ENCODE measurements at regions of chrX and their contacts with region 1.

Region 1: GRCh38 chrX:154490414-154491083 is at the start of gene SLC10A3:
- DNase-seq: peak; percentile 92
- ATAC-seq: peak; percentile 86
- H3K4me3 ChIP-seq: peak within 1 kb of the TSS; percentile 84
- H3K27ac ChIP-seq: peak within 1 kb of the TSS; percentile 93
- H3K4me1 ChIP-seq: peaks cover 2% of the 10 kb centered on the region; the same call in 1 of the 2 replicates
- H3K27me3 ChIP-seq: no peaks in the 10 kb centered on the region
- CTCF ChIP-seq: 0 out of 2 replicates have a peak, but pooled peaks have one; percentile 10
- POLR2A ChIP-seq: peak; percentile 95
- RAD21 ChIP-seq: 0 out of 2 replicates have a peak, but pooled peaks have one; percentile 13
- total RNA-seq, gene SLC10A3: 15.2 and 16.1 TPM in 2 replicates

Region 2: DNA sequence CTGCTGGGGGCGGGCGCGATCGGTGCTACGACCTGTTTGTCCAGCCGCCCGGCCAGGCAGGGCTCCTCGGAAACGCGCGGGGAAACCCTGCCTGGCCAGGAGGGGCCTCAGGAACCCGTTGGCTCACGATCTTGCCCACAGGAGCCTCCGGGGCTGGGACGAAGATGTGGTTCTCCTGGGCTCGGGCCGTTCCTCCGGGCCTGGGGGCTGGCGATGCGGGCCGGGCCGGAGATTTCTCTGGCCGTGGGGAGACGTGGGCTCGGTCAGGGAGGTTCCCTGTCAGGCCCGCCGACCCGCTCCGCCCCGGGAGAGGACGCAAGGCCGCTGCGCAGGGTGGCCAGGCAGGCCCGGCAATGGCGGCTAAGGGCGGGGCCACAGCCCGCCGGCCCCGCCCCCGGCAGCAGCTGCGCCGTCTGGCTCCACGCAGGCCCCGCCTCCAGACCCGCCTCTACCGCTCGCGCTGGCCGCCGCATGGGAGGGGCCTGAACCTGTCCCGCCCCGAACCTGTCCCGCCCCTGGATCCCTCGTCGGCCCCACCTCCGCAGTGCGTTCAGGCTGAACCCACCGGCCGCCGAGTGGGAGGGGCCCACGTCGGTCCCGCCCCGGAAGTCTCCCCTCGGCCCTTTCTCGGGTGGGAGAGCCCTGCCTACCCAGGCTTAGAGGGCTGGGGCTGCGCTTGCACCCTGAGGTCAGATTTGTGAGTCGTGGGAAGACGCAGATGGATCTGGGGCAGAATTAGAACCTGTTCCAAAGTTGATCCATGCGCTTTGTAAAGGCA is 25.5 kb after region 1 on chrX and contains the start of gene FAM3A:
- CTCF ChIA-PET with region 1: no interaction called
- POLR2A ChIA-PET with region 1: no interaction called
- dilution Hi-C with region 1: no loop called
- in situ Hi-C with region 1: no loop called
- intact Hi-C with region 1: loop called (anchors 2 kb)
- DNase-seq: peak; percentile 85
- ATAC-seq: peak; percentile 96
- H3K4me3 ChIP-seq: peak within 1 kb of the TSS; percentile 87
- H3K27ac ChIP-seq: peak within 1 kb of the TSS; percentile 91
- H3K4me1 ChIP-seq: peaks cover 8% of the 10 kb centered on the region; the same call in 1 of the 2 replicates
- H3K27me3 ChIP-seq: no peaks in the 10 kb centered on the region
- CTCF ChIP-seq: no peak
- POLR2A ChIP-seq: peak; percentile 71; the same call in 1 of the 2 replicates
- RAD21 ChIP-seq: no peak
- total RNA-seq, gene FAM3A: 14.0 and 15.0 TPM in 2 replicates

Region 3: DNA sequence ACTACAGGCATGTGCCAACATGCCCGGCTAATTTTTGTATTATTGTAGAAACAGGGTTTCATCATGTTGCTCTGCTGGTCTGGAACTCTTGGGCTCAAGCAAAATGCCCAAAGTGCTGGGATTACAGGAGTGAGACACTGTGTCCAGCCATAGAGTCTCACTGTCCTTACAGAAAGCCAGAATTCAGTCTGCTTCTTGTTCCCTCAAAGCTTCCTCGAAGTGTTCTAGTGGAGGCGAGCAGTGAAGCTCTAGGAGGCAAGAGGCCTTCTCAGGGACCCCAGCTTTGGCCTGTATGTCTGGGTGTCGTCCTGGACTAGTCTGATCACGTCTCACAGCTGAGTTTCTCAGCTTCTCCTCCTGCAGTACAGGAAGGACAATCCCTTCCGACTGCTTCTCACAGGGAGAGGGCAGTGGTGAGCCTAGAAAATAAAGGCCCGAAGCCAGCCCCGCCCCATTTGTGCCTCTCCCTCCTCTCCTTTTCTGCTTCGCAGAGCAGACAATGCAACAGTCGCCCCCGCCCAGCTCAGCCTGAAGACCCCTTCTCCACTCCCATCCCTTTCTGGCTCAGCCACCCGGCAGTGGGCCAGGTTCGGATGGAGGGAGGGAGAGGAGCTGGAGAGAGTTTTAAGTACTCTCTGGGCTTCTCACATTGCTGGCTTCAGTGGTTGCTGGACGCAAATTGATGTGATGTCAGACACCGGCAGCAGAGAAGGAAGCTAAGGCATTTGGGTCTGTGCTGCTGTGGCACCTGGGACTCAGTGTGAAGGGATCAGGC is 36.5 kb after region 1 on chrX:
- CTCF ChIA-PET with region 1: no interaction called
- POLR2A ChIA-PET with region 1: interaction called, 6 read pairs
- dilution Hi-C with region 1: no loop called
- in situ Hi-C with region 1: no loop called
- intact Hi-C with region 1: loop called (anchors 1 kb)
- DNase-seq: peak; percentile 67
- ATAC-seq: peak; percentile 76
- H3K4me3 ChIP-seq: no peak overlapping the region
- H3K27ac ChIP-seq: peak overlapping the region; percentile 98
- H3K4me1 ChIP-seq: peaks cover 10% of the 10 kb centered on the region
- H3K27me3 ChIP-seq: no peaks in the 10 kb centered on the region
- CTCF ChIP-seq: peak; percentile 52
- POLR2A ChIP-seq: no peak
- RAD21 ChIP-seq: peak; percentile 38

Region 4: DNA sequence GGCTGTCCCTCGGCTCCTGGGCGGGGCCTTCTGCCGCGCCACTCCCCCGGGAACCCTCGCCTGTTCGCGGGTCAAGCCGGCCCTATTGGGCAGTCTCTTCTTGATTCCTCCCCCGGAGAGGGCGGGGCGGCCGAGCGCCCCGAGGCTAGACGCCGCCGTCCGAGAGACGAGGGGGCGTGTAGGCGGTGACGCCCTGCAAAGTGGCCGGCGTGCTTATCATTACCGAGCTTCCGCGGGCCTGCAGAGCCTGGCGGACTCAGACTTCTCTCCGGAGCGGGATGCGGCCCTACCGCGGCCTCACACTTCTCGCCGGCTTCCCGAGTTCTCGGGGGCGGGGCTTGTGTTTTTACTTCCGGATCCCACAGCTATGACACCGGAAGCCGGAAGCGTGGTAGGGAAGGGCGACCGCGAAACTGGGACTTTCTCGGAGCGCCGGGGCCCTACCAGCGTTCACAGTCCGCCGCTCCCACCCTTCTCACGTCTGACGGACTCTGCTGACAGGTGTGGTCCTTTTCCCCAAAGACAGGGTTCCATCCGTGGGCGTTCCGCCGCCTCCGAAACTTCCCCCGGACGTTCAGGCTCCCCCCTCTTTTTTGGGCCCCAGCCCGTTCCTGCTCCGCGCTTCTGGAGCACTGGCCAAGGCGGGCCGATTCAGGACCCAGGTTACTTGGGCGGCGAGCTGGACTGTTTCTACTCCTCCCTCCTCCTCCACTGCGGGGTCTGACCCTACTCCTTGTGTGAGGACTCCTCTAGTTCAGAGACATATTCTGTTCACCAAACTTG is 56.9 kb after region 1 on chrX and contains the start of gene IKBKG:
- CTCF ChIA-PET with region 1: no interaction called
- POLR2A ChIA-PET with region 1: no interaction called
- dilution Hi-C with region 1: no loop called
- in situ Hi-C with region 1: no loop called
- intact Hi-C with region 1: loop called (anchors 2 kb)
- DNase-seq: peak; percentile 86
- ATAC-seq: peak; percentile 88
- H3K4me3 ChIP-seq: peak within 1 kb of the TSS; percentile 95
- H3K27ac ChIP-seq: peak within 1 kb of the TSS; percentile 97
- H3K4me1 ChIP-seq: peaks cover 9% of the 10 kb centered on the region
- H3K27me3 ChIP-seq: no peaks in the 10 kb centered on the region
- CTCF ChIP-seq: no peak
- POLR2A ChIP-seq: 0 out of 2 replicates have a peak, but pooled peaks have one; percentile 63
- RAD21 ChIP-seq: no peak
- total RNA-seq, gene IKBKG: 13.9 and 16.5 TPM in 2 replicates